GM13976 (cell line): ENCODE measurements at regions of chr11 and their contacts with region 1.

Region 1: GRCh38 chr11:75802913-75803820 is 11.8 kb upstream of the UVRAG start:
- DNase-seq: peak; percentile 84
- CTCF ChIP-seq: peak; percentile 81

Region 2: DNA sequence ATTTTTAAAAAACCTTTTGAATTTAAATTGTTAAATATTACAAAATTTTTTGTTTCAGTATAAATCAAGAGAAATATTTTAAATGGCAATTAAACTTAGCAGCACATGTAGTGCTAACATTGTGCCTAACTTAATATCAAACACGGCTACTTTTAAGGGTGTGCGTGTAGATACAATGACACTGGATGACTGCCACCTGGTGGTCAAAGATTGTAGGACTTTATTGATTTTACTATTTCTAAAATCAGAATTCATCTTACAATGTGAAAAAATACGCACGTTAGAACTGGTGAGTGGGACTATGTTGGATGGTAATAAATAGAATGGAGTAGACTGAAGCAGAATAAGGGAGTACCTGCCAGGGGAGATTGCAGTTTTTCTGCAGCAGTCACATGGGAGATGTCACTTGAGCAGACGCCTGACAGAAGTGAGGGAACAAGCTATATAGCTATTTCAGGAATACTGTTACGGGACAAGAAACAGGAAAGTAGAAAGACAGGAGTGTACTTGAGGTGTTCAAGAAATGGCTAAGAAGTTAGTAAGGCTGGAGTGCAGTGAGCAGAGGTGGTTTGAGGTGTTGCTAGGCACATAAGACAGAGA is 64.7 kb after region 1 on chr11:
- in situ Hi-C with region 1: loop called (anchors 10 kb)
- DNase-seq: peak; percentile 51
- CTCF ChIP-seq: peak; percentile 40

Region 3: DNA sequence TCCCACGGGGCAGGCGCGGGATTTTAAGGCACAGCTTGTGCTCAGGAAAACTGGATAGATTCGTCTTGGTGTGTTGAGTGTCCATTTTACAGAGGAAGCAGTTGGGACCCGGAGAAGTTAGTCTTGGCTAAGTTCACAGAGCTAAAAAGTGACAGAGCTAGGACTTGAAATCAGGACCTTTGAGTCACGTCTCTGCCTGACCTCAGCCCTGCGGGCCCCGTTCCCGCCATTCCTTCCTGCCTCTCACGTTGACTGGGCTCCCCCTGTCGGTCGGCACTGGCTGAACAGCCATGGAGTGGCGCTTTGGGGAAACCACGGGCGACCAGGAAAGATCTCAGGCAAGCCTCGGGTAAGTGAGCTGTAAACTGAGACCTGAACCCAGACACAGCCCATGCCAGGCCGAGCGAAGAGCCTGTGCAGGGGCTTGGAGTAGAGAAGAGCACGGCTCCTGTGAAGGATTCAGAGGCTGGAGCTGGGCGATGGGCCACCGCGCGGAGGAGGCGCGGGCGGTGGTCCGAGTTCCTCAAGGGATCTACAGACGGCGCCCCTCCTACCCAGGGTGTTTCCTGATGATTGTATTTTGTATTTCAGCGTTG is 349.0 kb after region 1 on chr11:
- in situ Hi-C with region 1: loop called (anchors 10 kb)
- DNase-seq: peak; percentile 93
- CTCF ChIP-seq: peak; percentile 98

Region 4: GRCh38 chr11:76424379-76424778 is 621.2 kb after region 1 on chr11:
- in situ Hi-C with region 1: no loop called
- DNase-seq: peak; percentile 61
- CTCF ChIP-seq: no peak